ENCODE measurements at regions of chr6 and their contacts with region 1.

Region 1: DNA sequence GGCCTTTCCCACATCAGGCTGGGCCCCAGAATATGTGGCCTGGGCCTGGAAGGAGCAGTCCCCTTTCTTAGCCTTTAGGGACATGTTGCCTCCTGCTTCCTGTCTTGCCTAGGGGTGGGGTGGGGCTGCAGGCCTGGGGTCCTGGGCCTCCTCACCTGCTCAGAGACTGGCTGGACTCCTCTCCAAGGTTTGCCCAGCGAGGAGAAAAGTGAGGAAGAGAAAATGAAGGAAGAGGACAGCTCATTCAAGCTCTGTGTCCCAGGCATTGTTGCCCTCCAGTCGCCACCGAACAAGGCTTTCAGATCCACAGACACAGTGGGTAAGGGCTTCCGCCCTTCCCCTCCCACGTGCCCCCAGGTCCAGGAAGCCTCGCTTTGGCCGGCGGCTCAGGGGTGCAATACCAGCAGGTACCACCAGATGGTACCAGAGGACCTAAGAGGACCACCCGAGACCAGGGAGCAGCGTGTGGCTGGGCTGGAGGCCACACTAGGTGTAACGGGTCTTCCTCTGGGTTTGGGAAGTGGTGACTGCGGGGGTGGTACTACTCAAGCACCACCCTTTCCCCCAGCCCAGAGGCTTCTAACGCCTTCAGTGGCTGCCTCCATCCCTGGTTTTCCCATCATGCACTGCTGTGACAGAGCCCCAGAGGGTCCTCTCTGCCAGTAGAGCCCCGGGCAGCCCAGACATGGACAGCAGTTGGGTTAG is 5.5 kb upstream of the BAK1 start:
- DNase-seq: peak; percentile 68 to 93 (median 83)
- H3K4me3 ChIP-seq: no peak overlapping the region
- H3K27ac ChIP-seq: no peak overlapping the region
- H3K4me1 ChIP-seq: peaks cover 9 to 18% of the 10 kb centered on the region in 2 donors
- H3K27me3 ChIP-seq: no peaks in the 10 kb centered on the region
- CTCF ChIP-seq: peak; percentile 92 to 99 (median 97)
- POLR2A ChIP-seq: no peak

Region 2: DNA sequence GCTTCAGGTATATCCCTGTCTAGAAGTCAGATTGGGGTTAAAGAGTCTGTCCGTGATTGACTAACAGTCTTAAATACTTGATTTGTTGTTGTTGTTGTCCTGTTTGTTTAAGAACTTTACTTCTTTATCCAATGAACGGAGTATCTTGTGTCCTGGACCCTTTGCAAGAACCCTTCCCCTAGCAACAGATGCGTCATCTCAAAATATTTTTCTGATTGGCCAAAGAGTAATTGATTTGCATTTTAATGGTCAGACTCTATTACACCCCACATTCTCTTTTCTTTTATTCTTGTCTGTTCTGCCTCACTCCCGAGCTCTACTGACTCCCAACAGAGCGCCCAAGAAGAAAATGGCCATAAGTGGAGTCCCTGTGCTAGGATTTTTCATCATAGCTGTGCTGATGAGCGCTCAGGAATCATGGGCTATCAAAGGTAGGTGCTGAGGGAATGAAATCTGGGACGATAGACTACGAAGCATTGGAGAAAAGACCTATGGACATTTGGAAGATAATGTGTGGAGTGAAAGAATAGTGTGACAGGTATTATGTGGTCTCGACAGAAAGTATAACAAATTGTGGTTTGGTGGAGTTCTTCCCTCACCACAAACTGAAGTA is 1145.8 kb before region 1 on chr6 and contains the start of gene HLA-DRA:
- intact Hi-C with region 1: no loop called
- DNase-seq: peak in 6 of 7 donors; percentile 11 to 57 (median 48)
- H3K4me3 ChIP-seq: peak within 1 kb of the TSS in 2 of 4 donors; percentile 30 to 60
- H3K27ac ChIP-seq: peak within 1 kb of the TSS; percentile 55 to 91 (median 63)
- H3K4me1 ChIP-seq: peaks cover 0 to 7% of the 10 kb centered on the region in 2 donors
- H3K27me3 ChIP-seq: no peaks in the 10 kb centered on the region
- CTCF ChIP-seq: no peak
- POLR2A ChIP-seq: peak; percentile 85 to 89
- total RNA-seq, gene HLA-DRA: 36.8 to 1,447 (median 612) TPM

Region 3: GRCh38 chr6:33633462-33634158 is 48.1 kb after region 1 on chr6:
- intact Hi-C with region 1: loop called (anchors 5 to 10 kb)
- DNase-seq: peak; percentile 66 to 80 (median 71)
- H3K4me3 ChIP-seq: peak overlapping the region in 2 of 4 donors; percentile 8 to 63
- H3K27ac ChIP-seq: peak overlapping the region in 2 of 5 donors; percentile 7 to 72
- H3K4me1 ChIP-seq: peaks cover 12 to 14% of the 10 kb centered on the region in 2 donors
- H3K27me3 ChIP-seq: no peaks in the 10 kb centered on the region
- CTCF ChIP-seq: no peak
- POLR2A ChIP-seq: no peak

Region 4: GRCh38 chr6:33696548-33697518 is 111.3 kb after region 1 on chr6:
- intact Hi-C with region 1: loop called (anchors 5 kb)
- DNase-seq: peak; percentile 50 to 90 (median 74)
- H3K4me3 ChIP-seq: no peak overlapping the region
- H3K27ac ChIP-seq: peak overlapping the region in 4 of 5 donors; percentile 18 to 77 (median 51)
- H3K4me1 ChIP-seq: peaks cover 11 to 33% of the 10 kb centered on the region in 2 donors
- H3K27me3 ChIP-seq: no peaks in the 10 kb centered on the region
- CTCF ChIP-seq: no peak
- POLR2A ChIP-seq: no peak

Region 5: DNA sequence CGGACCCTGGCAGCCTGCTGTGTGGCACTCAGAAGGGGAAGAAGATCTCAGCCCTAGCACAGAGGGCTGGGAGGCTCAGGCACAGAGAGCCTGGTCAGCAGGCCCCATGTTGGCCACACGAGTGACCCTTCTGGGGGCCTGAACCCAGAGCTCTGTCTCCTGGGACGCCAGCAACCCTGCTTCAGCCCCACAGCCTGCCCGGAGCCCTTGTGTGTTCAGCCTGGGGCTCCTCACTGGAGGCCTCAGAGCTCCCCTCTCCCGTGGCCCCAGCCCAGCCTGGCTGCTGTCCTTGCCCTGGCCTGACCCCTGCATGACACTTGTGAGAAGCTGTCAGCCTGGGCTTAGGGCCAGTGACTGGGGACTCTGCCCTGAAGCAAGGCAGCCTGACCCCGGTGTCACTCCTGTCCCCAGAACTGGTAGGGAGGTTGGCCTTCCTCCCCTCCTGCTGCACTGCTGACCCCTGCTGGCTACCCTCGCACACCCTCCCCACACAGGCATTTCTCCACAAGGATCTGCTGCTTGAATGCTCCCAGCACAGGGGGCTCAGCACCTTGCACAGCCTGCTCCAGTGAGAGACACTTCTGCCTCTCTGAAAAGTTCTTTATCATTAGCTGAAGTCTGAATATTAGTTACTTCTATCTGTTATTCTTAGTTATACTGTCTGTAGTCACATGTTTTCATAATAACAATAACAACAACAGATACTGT is 176.5 kb after region 1 on chr6:
- intact Hi-C with region 1: loop called in 1 of 2 experiments (anchors 5 kb)
- DNase-seq: peak; percentile 70 to 94 (median 89)
- H3K4me3 ChIP-seq: no peak overlapping the region
- H3K27ac ChIP-seq: peak overlapping the region in 2 of 5 donors; percentile 30 to 55
- H3K4me1 ChIP-seq: peaks cover 3 to 17% of the 10 kb centered on the region in 2 donors
- H3K27me3 ChIP-seq: no peaks in the 10 kb centered on the region
- CTCF ChIP-seq: peak; percentile 14 to 89 (median 66)
- POLR2A ChIP-seq: no peak